ENCODE measurements at regions of chr1 and their contacts with region 1.

Region 1: GRCh38 chr1:193729429-193729828 is 543.0 kb upstream of the B3GALT2 start:
- DNase-seq: no peak
- H3K4me3 ChIP-seq: no peak overlapping the region
- H3K27ac ChIP-seq: no peak overlapping the region
- H3K4me1 ChIP-seq: no peaks in the 10 kb centered on the region
- H3K27me3 ChIP-seq: no peaks in the 10 kb centered on the region
- CTCF ChIP-seq: no peak

Region 2: GRCh38 chr1:193747579-193747978 is 18.1 kb after region 1 on chr1:
- CTCF ChIA-PET with region 1: no interaction called
- POLR2A ChIA-PET with region 1: interaction called, 10 read pairs
- intact Hi-C with region 1: no loop called
- DNase-seq: no peak
- H3K4me3 ChIP-seq: no peak overlapping the region
- H3K27ac ChIP-seq: no peak overlapping the region
- H3K4me1 ChIP-seq: no peaks in the 10 kb centered on the region
- H3K27me3 ChIP-seq: no peaks in the 10 kb centered on the region
- CTCF ChIP-seq: no peak

Measured in PC-9 (cell line).